Naive thymus-derived CD4-positive, alpha-beta T cell (primary cell): ENCODE measurements at regions of chr4 and their contacts with region 1.

Region 1: GRCh38 chr4:89158884-89159503 is 47.7 kb downstream of the TIGD2 start:
- DNase-seq: peak in 5 of 9 donors; percentile 5 to 30 (median 21)
- ATAC-seq: peak; percentile 82
- H3K4me3 ChIP-seq: no peak overlapping the region
- H3K4me3 Mint-ChIP-seq: no peak overlapping the region
- H3K27ac ChIP-seq: no peak overlapping the region
- H3K27ac Mint-ChIP-seq: no peak overlapping the region
- H3K4me1 ChIP-seq: no peaks in the 10 kb centered on the region
- H3K4me1 Mint-ChIP-seq: peaks cover 0 to 5% (median 0%) of the 10 kb centered on the region in 7 donors
- H3K27me3 ChIP-seq: no peaks in the 10 kb centered on the region
- H3K27me3 Mint-ChIP-seq: peaks cover 3 to 20% (median 5%) of the 10 kb centered on the region in 5 donors

Region 2: GRCh38 chr4:89000844-89001360 is 158.1 kb before region 1 on chr4:
- CTCF ChIA-PET with region 1: no interaction called
- POLR2A ChIA-PET with region 1: no interaction called
- intact Hi-C with region 1: no loop called
- DNase-seq: no peak
- ATAC-seq: peak; percentile 56
- H3K4me3 ChIP-seq: no peak overlapping the region
- H3K4me3 Mint-ChIP-seq: no peak overlapping the region
- H3K27ac ChIP-seq: no peak overlapping the region
- H3K27ac Mint-ChIP-seq: no peak overlapping the region
- H3K4me1 ChIP-seq: no peaks in the 10 kb centered on the region
- H3K4me1 Mint-ChIP-seq: peaks cover 0 to 9% (median 6%) of the 10 kb centered on the region in 7 donors
- H3K27me3 ChIP-seq: no peaks in the 10 kb centered on the region
- H3K27me3 Mint-ChIP-seq: peaks cover 0 to 4% (median 0%) of the 10 kb centered on the region in 5 donors

Region 3: GRCh38 chr4:89434364-89434988 is 275.5 kb after region 1 on chr4:
- CTCF ChIA-PET with region 1: interaction called, 10 read pairs
- POLR2A ChIA-PET with region 1: no interaction called
- intact Hi-C with region 1: loop called (anchors 1 kb)
- DNase-seq: peak in 6 of 9 donors; percentile 28 to 61 (median 45)
- ATAC-seq: peak; percentile 72
- H3K4me3 ChIP-seq: no peak overlapping the region
- H3K4me3 Mint-ChIP-seq: no peak overlapping the region
- H3K27ac ChIP-seq: no peak overlapping the region
- H3K27ac Mint-ChIP-seq: peak overlapping the region in 1 of 9 donors; percentile 14
- H3K4me1 ChIP-seq: no peaks in the 10 kb centered on the region
- H3K4me1 Mint-ChIP-seq: peaks cover 8 to 23% (median 13%) of the 10 kb centered on the region in 7 donors
- H3K27me3 ChIP-seq: no peaks in the 10 kb centered on the region
- H3K27me3 Mint-ChIP-seq: no peaks in the 10 kb centered on the region

Region 4: GRCh38 chr4:89904524-89904923 is 745.5 kb after region 1 on chr4:
- CTCF ChIA-PET with region 1: interaction called, 3 read pairs
- POLR2A ChIA-PET with region 1: no interaction called
- intact Hi-C with region 1: loop called (anchors 1 to 5 kb)
- DNase-seq: no peak
- ATAC-seq: no peak
- H3K4me3 ChIP-seq: no peak overlapping the region
- H3K4me3 Mint-ChIP-seq: no peak overlapping the region
- H3K27ac ChIP-seq: no peak overlapping the region
- H3K27ac Mint-ChIP-seq: no peak overlapping the region
- H3K4me1 ChIP-seq: no peaks in the 10 kb centered on the region
- H3K4me1 Mint-ChIP-seq: no peaks in the 10 kb centered on the region
- H3K27me3 ChIP-seq: no peaks in the 10 kb centered on the region
- H3K27me3 Mint-ChIP-seq: peaks cover 0 to 17% (median 0%) of the 10 kb centered on the region in 5 donors